ENCODE measurements at regions of chrX and their contacts with region 1.

Region 1: DNA sequence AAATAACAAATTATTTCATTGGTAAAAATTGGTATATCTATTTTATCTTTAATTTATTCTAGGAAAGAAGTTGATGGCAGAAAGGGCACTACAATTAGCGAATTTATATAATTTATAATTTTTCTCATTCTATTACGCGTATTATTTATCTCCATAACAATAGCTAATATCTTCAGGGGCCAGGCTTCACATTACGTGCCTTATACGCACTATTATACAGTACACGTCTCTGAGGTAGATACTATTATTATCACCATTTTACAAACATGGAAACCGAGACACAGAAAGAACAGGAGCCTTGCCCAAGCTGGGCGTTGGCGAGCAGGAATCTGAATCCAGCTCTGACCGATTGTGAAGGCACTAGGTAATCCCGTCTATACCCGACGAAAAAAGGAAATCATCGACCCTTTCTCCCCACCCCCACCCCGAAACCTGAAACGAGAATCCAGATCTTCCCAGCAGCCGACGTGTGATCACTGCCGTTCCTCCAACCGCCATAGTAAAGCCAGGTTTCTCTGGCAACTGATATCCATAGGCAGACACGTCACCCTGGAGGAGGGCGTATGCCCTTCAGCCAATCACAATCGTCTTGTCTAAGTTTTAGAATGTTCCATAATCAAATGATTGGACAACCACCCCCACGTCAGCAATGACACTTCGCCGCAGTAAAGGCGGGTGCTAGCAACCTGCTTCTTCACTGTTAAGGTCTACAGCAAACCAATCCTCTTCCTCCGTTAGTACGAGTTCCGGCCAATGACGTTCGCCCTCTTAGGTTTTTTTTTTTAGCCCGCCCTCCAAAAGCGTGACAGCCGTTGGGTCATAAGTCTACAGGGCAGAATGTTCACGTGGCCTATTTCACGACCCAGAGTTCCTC is at the start of gene MORF4L2:
- DNase-seq: peak; percentile 97
- H3K4me3 ChIP-seq: peak within 1 kb of the TSS; percentile 55 to 83 (median 70)
- H3K27ac ChIP-seq: peak within 1 kb of the TSS; percentile 95
- H3K4me1 ChIP-seq: peaks cover 11% of the 10 kb centered on the region
- H3K27me3 ChIP-seq: no peaks in the 10 kb centered on the region
- CTCF ChIP-seq: no peak
- total RNA-seq, gene MORF4L2: 465 to 771 TPM

Region 2: DNA sequence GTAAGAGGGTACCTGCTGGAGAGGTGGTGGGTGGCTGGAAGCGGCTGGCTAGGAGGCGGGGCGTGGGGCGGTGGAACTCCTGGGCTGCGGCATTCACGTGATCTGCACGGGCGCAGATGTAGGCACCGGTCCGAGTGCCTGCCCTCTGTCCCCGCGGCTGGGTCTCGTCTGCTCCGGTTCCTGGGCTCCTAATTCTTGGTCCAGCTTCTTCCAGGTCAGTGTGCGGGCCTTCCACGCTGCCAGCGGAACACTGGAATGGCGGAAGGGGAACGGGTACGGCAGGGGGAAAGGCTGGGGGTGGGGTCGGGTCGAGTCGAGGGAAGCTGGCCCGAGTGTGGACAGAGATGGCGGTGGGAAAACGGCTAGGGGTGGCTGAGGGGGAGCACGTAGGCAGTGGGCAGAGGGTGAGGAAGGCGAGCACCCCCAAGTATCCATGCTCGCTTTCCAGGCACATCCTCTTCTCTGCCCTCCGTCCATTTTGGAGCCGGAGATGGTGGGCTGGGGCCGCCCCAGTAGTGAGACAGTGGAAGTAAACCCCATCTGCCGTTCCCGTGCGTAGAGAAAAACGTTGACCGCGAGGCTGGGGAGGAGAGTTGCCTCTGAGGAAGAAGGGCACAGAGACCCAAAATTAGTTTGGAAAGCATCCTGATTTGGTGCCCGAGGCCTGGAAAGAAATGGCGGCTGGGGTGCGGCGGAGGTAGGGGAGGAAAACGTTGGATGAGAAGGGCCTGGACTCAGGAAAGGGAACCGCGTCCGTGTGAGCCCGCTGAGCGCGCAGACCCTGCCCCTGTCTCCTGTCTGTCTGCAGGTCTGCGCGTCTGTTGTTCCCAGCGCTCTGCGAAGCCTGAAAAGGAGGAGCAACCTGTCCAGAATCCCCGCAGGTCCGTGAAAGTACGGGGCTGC is 100.8 kb before region 1 on chrX and contains the start of gene TCEAL4:
- CTCF ChIA-PET with region 1: no interaction called
- dilution Hi-C with region 1: no loop called
- in situ Hi-C with region 1: no loop called
- intact Hi-C with region 1: loop called (anchors 5 kb)
- DNase-seq: peak; percentile 13
- H3K4me3 ChIP-seq: peak within 1 kb of the TSS; percentile 59 to 61 (median 59)
- H3K27ac ChIP-seq: peak within 1 kb of the TSS; percentile 57
- H3K4me1 ChIP-seq: peaks cover 3% of the 10 kb centered on the region
- H3K27me3 ChIP-seq: no peaks in the 10 kb centered on the region
- CTCF ChIP-seq: no peak
- total RNA-seq, gene TCEAL4: 33.3 to 98.1 TPM

Region 3: DNA sequence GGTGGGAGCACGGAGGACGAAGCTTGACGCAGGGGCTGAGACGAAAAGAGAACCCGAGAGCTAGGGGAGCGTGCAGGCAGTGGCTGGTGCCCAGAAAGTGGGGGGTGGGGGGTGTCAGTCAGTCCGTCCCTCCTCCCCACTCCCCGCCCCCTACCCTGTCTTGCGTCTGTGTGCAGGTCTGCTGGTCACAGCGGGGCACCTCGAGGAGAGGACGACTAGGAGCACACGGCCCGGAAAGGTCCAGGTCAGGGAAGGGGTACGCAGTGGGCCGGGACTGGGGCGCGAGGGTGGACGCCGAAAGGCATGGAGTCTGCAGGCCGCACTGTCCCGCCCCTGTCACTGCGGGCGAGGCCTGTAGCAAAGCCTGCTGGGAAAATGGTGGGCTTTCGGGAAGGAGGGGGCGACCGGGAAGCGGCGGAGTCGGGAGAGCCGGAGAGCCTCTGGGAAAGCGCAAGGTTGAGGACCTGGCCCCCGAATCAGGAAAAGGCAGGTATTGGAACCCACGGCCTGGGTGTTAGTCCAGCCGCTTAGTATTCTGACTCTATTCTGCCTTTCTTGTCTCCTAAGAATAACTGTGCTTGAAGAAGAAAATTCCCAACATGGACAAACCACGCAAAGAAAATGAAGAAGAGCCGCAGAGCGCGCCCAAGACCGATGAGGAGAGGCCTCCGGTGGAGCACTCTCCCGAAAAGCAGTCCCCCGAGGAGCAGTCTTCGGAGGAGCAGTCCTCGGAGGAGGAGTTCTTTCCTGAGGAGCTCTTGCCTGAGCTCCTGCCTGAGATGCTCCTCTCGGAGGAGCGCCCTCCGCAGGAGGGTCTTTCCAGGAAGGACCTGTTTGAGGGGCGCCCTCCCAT is 56.9 kb before region 1 on chrX:
- CTCF ChIA-PET with region 1: no interaction called
- dilution Hi-C with region 1: no loop called
- in situ Hi-C with region 1: loop called in 1 of 2 experiments (anchors 10 kb)
- intact Hi-C with region 1: loop called (anchors 2 kb)
- DNase-seq: peak; percentile 46
- H3K4me3 ChIP-seq: peak overlapping the region; percentile 43 to 71 (median 46)
- H3K27ac ChIP-seq: peak overlapping the region; percentile 52
- H3K4me1 ChIP-seq: peaks cover 16% of the 10 kb centered on the region
- H3K27me3 ChIP-seq: no peaks in the 10 kb centered on the region
- CTCF ChIP-seq: peak; percentile 14 to 56

Region 4: GRCh38 chrX:103774070-103774642 is 87.7 kb after region 1 on chrX:
- CTCF ChIA-PET with region 1: no interaction called
- dilution Hi-C with region 1: no loop called
- in situ Hi-C with region 1: no loop called
- intact Hi-C with region 1: loop called (anchors 1 kb)
- DNase-seq: peak; percentile 32
- H3K4me3 ChIP-seq: no peak overlapping the region
- H3K27ac ChIP-seq: no peak overlapping the region
- H3K4me1 ChIP-seq: no peaks in the 10 kb centered on the region
- H3K27me3 ChIP-seq: no peaks in the 10 kb centered on the region
- CTCF ChIP-seq: peak; percentile 54 to 73

Region 5: GRCh38 chrX:103941201-103941975 is 255.0 kb after region 1 on chrX:
- CTCF ChIA-PET with region 1: no interaction called
- dilution Hi-C with region 1: no loop called
- in situ Hi-C with region 1: loop called in 1 of 2 experiments (anchors 25 kb)
- intact Hi-C with region 1: no loop called
- DNase-seq: peak; percentile 35
- H3K4me3 ChIP-seq: no peak overlapping the region
- H3K27ac ChIP-seq: no peak overlapping the region
- H3K4me1 ChIP-seq: no peaks in the 10 kb centered on the region
- H3K27me3 ChIP-seq: no peaks in the 10 kb centered on the region
- CTCF ChIP-seq: peak; percentile 40 to 63

Region 6: DNA sequence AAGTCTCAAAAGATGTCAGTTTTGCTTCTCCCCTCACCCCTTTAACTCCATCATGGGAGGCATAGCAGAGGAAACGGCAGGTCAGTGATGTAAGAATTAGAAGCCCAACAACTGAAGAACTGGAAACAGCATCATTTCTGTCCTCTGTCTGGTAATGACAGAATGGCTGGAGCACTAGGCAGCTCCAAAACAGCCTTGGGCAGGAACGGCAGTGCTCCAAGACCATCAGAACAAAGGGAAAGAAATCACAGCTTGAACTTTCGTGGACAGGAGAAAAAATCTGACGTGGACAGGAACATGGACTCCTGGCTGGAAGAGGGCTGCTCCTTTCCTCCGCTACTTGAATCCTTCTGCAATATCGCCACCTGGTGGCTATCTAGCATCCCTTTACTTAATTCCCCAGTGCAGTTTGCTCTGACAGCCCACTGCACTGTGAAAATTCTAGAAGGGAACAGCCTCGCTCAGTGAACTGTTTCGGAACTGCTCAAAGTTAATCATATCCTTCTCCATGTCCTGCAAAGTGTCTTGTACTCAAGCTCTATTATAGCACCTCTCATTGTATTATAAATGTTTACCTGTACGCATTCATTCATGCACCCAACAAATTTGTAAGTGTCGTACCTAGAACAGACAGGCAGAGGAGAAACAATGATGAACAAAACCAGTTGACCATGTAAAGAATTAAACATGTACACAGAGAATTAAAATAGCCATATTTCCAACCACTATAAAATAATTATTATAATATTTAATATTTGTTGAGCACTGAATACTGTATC is 450.0 kb after region 1 on chrX:
- CTCF ChIA-PET with region 1: no interaction called
- dilution Hi-C with region 1: no loop called
- in situ Hi-C with region 1: no loop called
- intact Hi-C with region 1: loop called (anchors 1 kb)
- DNase-seq: peak; percentile 65
- H3K4me3 ChIP-seq: peak overlapping the region in 2 of 3 experiments; percentile 37 to 40
- H3K27ac ChIP-seq: no peak overlapping the region
- H3K4me1 ChIP-seq: no peaks in the 10 kb centered on the region
- H3K27me3 ChIP-seq: no peaks in the 10 kb centered on the region
- CTCF ChIP-seq: peak; percentile 79

Measured in mammary epithelial cell (primary cell).